ENCODE measurements at regions of chr5 and their contacts with region 1.

Region 1: GRCh38 chr5:113678924-113679575 is 165.6 kb downstream of the YTHDC2 start:
- DNase-seq: peak; percentile 37 to 58
- H3K4me3 ChIP-seq: no peak overlapping the region
- H3K4me1 ChIP-seq: no peaks in the 10 kb centered on the region
- H3K27me3 ChIP-seq: no peaks in the 10 kb centered on the region

Region 2: DNA sequence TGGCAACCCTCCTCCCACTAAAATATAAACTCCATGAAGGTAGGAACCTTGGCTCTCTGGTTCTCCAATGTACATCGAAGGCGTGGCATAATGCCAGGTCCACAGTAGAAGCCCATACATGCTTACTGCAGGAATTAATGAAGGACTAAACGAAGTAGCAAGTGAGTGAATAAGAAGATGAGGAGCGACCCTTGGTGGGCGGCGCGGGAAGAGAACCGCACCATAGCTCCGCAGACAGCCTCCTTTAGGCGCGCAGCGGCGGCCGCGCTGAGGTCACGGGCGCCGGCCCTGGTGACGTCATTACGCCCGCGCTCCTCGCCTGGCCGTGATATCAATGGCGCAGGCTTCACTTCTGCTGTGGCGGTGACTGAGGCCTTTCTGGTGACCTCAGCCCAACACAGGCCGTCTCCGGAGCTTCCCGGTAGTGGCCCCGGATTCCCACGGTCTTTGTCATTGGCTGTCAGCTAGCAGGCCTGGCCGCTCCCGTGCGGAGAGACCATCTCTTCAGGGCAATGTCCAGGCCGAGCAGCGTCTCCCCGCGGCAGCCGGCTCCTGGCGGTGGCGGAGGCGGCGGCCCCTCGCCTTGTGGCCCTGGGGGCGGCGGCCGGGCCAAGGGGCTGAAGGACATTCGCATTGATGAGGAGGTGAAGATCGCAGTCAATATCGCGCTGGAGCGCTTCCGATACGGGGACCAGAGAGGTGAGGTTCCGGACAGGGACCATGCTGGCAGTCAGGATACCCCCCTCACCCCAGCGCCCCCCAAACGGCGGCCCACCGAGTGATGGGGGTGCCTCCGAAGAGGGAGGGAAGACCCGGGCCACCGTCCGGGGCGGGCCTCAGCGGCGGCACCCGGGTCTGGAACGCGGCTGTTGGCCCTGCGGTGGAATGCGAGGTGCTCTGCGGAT is 165.4 kb before region 1 on chr5 and contains the start of gene YTHDC2:
- in situ Hi-C with region 1: no loop called
- DNase-seq: peak; percentile 80 to 90
- H3K4me3 ChIP-seq: peak within 1 kb of the TSS; percentile 70
- H3K4me1 ChIP-seq: peaks cover 6% of the 10 kb centered on the region; the same call in 1 of the 2 replicates
- H3K27me3 ChIP-seq: peaks cover 5% of the 10 kb centered on the region; the same call in 1 of the 2 replicates

Region 3: GRCh38 chr5:113813466-113813865 is 134.4 kb after region 1 on chr5:
- in situ Hi-C with region 1: no loop called
- DNase-seq: peak in 1 of 2 experiments; percentile 12
- H3K4me3 ChIP-seq: no peak overlapping the region
- H3K4me1 ChIP-seq: no peaks in the 10 kb centered on the region
- H3K27me3 ChIP-seq: peaks cover 5% of the 10 kb centered on the region; the same call in 1 of the 2 replicates

Region 4: GRCh38 chr5:114449860-114450421 is 770.9 kb after region 1 on chr5:
- in situ Hi-C with region 1: loop called (anchors 25 kb)
- DNase-seq: peak; percentile 42 to 68
- H3K4me3 ChIP-seq: no peak overlapping the region
- H3K4me1 ChIP-seq: no peaks in the 10 kb centered on the region
- H3K27me3 ChIP-seq: peaks cover 7% of the 10 kb centered on the region; the same call in 1 of the 2 replicates

Region 5: DNA sequence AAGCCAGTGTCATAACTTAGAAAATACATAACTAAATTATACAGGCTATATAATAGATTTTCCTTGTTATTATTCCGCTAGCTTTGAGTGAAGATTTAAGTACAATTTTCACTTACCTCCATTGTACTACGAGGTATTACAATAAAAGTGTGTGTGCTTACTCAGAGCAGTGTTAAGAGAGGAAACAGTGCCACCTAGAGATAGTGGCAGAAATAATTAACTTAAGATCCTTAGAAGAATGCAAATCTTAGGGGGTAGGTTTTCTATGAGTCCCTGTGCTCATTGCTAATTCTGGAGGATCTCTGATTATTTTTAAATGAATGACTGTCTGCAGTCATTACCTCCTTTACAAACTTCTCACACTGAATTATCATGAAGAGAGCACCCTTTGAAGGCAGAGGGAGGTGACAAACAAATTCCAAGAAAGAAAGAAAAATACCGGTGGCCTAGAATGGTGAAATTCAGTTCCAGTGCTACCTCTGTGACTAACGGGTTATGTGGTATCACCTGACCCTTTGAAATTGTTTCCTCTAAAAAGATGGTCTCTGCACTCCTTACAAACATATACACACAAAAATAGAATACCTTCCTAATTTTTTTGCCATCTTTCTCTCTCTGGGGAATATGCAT is 1110.8 kb after region 1 on chr5:
- in situ Hi-C with region 1: loop called (anchors 25 kb)
- DNase-seq: peak in 1 of 2 experiments; percentile 30
- H3K4me3 ChIP-seq: no peak overlapping the region
- H3K4me1 ChIP-seq: no peaks in the 10 kb centered on the region
- H3K27me3 ChIP-seq: no peaks in the 10 kb centered on the region